PC-9 (cell line): ENCODE measurements at regions of chr2 and their contacts with region 1.

Region 1: GRCh38 chr2:10122386-10123280 is at the start of gene RRM2:
- DNase-seq: peak; percentile 83 to 92
- H3K4me3 ChIP-seq: peak within 1 kb of the TSS; percentile 88
- H3K27ac ChIP-seq: peak within 1 kb of the TSS; percentile 93
- H3K4me1 ChIP-seq: peaks cover 34% of the 10 kb centered on the region
- H3K27me3 ChIP-seq: no peaks in the 10 kb centered on the region
- CTCF ChIP-seq: no peak
- total RNA-seq, gene RRM2: 90.4 and 105 TPM in 2 replicates

Region 2: DNA sequence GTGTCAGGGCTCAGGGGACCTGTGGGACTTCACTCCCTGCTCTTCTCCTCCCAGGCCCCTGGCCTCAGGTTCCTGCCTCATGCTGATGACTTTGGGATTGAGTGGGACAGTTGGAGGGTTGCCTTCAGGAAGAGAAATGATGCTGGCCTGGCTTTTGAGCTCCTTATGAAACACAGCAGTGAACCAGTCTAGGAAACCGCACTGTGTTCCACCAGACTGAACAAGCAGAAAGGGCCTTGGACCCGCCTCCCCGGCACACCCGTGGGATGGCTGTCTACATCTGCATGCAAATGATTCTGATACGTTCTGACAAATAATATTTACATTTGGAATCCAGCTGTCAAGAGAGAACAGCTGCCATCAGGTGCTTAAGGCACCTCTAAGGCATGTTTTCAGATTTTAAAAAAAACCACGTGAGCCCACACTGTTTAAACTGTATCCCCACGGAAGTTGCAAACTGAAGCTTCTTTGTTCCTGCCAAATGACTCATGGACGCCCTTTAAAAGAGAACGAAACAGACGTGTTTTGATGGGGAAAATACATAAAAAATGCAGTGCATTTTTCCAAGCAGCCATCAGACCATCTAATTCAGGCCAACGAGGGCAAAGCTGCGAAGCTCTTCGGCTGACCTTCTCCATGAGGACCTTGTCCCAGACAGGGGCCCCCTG is 943.6 kb before region 1 on chr2:
- CTCF ChIA-PET with region 1: no interaction called
- POLR2A ChIA-PET with region 1: no interaction called
- intact Hi-C with region 1: no loop called
- DNase-seq: peak; percentile 54 to 89
- H3K4me3 ChIP-seq: peak overlapping the region; percentile 18; the same call in 1 of the 2 replicates
- H3K27ac ChIP-seq: peak overlapping the region; percentile 90
- H3K4me1 ChIP-seq: peaks cover 69% of the 10 kb centered on the region
- H3K27me3 ChIP-seq: no peaks in the 10 kb centered on the region
- CTCF ChIP-seq: no peak

Region 3: DNA sequence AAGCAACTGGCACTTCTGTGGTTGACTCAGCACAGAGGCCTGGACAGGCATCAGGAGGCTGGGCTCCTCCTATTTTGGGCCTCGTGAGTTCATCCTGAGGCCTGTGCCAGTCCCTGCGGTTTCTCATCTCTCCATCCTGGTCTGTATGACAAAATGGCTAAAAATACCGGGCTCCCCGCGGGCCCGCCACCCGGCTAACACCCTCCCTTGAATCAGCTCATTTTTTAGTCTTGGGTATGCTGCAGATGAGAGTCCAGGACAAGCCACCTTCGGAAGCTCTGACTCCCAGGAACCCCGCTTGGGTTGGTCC is 429.5 kb before region 1 on chr2:
- CTCF ChIA-PET with region 1: no interaction called
- POLR2A ChIA-PET with region 1: no interaction called
- intact Hi-C with region 1: no loop called
- DNase-seq: no peak
- H3K4me3 ChIP-seq: no peak overlapping the region
- H3K27ac ChIP-seq: no peak overlapping the region
- H3K4me1 ChIP-seq: no peaks in the 10 kb centered on the region
- H3K27me3 ChIP-seq: no peaks in the 10 kb centered on the region
- CTCF ChIP-seq: no peak

Region 4: GRCh38 chr2:9753276-9753600 is 369.4 kb before region 1 on chr2:
- CTCF ChIA-PET with region 1: interaction called, 10 read pairs
- POLR2A ChIA-PET with region 1: interaction called, 3 read pairs
- intact Hi-C with region 1: no loop called
- DNase-seq: peak; percentile 56 to 96
- H3K4me3 ChIP-seq: peak overlapping the region; percentile 71
- H3K27ac ChIP-seq: peak overlapping the region; percentile 99
- H3K4me1 ChIP-seq: peaks cover 35% of the 10 kb centered on the region
- H3K27me3 ChIP-seq: no peaks in the 10 kb centered on the region
- CTCF ChIP-seq: no peak

Region 5: DNA sequence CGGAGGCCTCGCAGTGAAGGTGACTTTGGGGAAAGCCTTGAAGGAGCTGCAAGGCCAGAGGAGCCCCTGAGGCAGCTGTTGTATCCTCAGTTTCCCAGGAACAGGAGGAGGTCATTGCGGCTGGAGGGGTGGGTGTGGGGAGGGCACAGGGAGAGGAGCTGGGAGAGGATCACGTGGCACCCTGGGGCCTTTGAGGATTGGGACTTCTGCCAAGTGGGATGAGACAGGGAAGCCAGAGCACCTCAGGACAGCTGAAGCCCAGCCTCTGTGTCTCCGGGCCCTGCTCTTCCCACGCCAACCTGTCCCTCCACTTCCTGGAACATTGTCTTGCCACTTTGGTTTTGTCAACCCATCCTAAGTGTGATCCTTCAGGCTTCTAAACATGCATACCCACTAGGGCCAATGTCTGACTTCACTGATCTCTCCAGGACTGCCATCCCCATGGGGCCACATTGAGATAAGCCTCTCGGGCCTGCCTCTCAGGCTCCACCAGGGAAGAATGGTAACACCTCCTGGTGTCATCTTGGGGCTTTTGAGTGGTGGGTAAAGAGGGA is 19.4 kb before region 1 on chr2:
- CTCF ChIA-PET with region 1: no interaction called
- POLR2A ChIA-PET with region 1: interaction called, 11 read pairs
- intact Hi-C with region 1: no loop called
- DNase-seq: no peak
- H3K4me3 ChIP-seq: no peak overlapping the region
- H3K27ac ChIP-seq: no peak overlapping the region
- H3K4me1 ChIP-seq: no peaks in the 10 kb centered on the region
- H3K27me3 ChIP-seq: no peaks in the 10 kb centered on the region
- CTCF ChIP-seq: no peak

Region 6: GRCh38 chr2:10302479-10303180 is 180.0 kb after region 1 on chr2 and contains the start of gene HPCAL1:
- CTCF ChIA-PET with region 1: no interaction called
- POLR2A ChIA-PET with region 1: no interaction called
- intact Hi-C with region 1: loop called (anchors 2 kb)
- DNase-seq: peak; percentile 85 to 96
- H3K4me3 ChIP-seq: peak within 1 kb of the TSS; percentile 92
- H3K27ac ChIP-seq: peak within 1 kb of the TSS; percentile 83
- H3K4me1 ChIP-seq: peaks cover 71% of the 10 kb centered on the region
- H3K27me3 ChIP-seq: no peaks in the 10 kb centered on the region
- CTCF ChIP-seq: peak; percentile 63
- total RNA-seq, gene HPCAL1: 91.1 and 105 TPM in 2 replicates

Region 7: GRCh38 chr2:10659898-10660568 is 537.4 kb after region 1 on chr2:
- CTCF ChIA-PET with region 1: no interaction called
- POLR2A ChIA-PET with region 1: no interaction called
- intact Hi-C with region 1: loop called (anchors 2 kb)
- DNase-seq: peak; percentile 67 to 76
- H3K4me3 ChIP-seq: no peak overlapping the region
- H3K27ac ChIP-seq: no peak overlapping the region
- H3K4me1 ChIP-seq: peaks cover 24% of the 10 kb centered on the region
- H3K27me3 ChIP-seq: no peaks in the 10 kb centered on the region
- CTCF ChIP-seq: peak; percentile 84